SK-N-SH (cell line): ENCODE measurements at regions of chr17 and their contacts with region 1.

Region 1: GRCh38 chr17:67200720-67201301 is 44.2 kb downstream of the HELZ start:
- DNase-seq: peak; percentile 55
- H3K4me3 ChIP-seq: peak overlapping the region in 1 of 2 experiments; percentile 15; a peak in 1 of 4 replicates
- H3K27ac ChIP-seq: no peak overlapping the region
- H3K4me1 ChIP-seq: peaks cover 0 to 8% of the 10 kb centered on the region in 2 experiments; a peak in 3 of 4 replicates
- H3K27me3 ChIP-seq: no peaks in the 10 kb centered on the region
- CTCF ChIP-seq: peak; percentile 66
- EP300 ChIP-seq: no peak
- RAD21 ChIP-seq: peak; percentile 22; the same call in 1 of the 2 replicates

Region 2: DNA sequence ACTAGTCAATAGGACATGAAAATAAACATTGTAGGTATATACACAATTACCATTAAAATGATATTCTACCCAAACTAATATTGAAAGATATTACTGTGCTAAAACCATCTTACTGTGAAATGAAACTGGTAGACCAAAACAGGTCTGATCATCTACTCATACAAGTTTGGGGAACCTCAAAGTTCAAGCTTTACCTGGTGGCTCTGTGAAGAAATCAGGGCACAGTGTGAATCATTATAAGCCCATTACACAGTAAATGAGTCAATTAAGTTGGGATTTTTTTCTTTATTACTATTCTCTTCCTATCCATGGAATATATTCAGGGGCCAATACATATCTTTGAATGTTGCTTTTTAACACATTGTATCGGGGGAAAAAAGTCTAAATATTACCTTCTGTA is 12.9 kb before region 1 on chr17:
- CTCF ChIA-PET with region 1: interaction called, 16 read pairs
- POLR2A ChIA-PET with region 1: no interaction called
- DNase-seq: no peak
- H3K4me3 ChIP-seq: no peak overlapping the region
- H3K27ac ChIP-seq: no peak overlapping the region
- H3K4me1 ChIP-seq: no peaks in the 10 kb centered on the region; a peak in 1 of 4 replicates
- H3K27me3 ChIP-seq: no peaks in the 10 kb centered on the region
- CTCF ChIP-seq: no peak
- EP300 ChIP-seq: no peak
- RAD21 ChIP-seq: no peak

Region 3: GRCh38 chr17:67212689-67213417 is 12.0 kb after region 1 on chr17:
- CTCF ChIA-PET with region 1: interaction called, 79 read pairs
- POLR2A ChIA-PET with region 1: no interaction called
- DNase-seq: no peak
- H3K4me3 ChIP-seq: no peak overlapping the region
- H3K27ac ChIP-seq: peak overlapping the region; percentile 5 to 26
- H3K4me1 ChIP-seq: peaks cover 12 to 17% of the 10 kb centered on the region in 2 experiments
- H3K27me3 ChIP-seq: no peaks in the 10 kb centered on the region
- CTCF ChIP-seq: no peak
- EP300 ChIP-seq: no peak
- RAD21 ChIP-seq: no peak

Region 4: DNA sequence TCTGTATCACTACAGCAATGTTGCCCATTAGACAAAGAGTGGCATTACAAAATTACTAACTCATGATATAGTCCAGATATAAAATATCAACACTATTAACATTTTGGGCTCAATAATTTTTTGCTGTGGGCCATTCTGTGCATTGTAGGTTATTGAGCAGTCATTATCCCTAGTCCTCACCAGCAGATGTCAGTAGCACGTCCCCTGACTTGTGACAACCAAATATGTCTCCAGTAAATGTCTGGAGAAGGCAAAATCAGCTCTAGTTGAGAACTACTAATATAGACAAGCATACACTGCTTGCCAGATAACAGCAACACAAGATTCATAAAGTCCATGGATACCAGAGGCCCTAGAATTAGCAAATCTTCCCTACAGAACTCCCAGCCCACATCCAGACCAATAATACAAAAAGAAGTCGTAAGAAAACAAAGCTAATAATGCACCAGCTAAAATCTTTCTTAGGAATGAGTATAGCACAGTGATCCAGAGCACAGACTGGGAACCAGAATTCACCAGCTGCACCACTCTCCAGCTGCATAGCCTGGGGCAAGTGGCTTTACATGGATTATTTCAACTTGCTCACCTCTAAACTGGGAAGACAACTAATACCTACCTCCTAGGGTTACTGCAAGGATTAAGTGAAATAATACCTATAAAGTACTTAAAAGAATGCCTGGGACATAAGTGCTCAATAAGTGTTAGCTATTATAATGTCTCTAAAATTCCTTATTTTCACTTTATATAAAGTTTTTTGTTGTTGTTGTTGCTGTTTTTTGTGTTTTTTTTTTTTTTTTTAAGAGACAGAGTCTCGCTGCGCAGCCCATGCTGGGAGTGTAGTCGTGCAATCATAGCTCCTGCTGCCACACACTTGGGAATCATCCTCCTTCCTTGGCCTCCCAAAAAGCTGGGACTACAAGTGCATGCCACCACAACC is 20.5 kb after region 1 on chr17:
- CTCF ChIA-PET with region 1: interaction called, 79 read pairs
- POLR2A ChIA-PET with region 1: no interaction called
- DNase-seq: peak; percentile 56
- H3K4me3 ChIP-seq: no peak overlapping the region
- H3K27ac ChIP-seq: peak overlapping the region in 1 of 2 experiments; percentile 69; a peak in 2 of 4 replicates
- H3K4me1 ChIP-seq: peaks cover 10 to 17% of the 10 kb centered on the region in 2 experiments; a peak in 2 of 4 replicates
- H3K27me3 ChIP-seq: no peaks in the 10 kb centered on the region
- CTCF ChIP-seq: peak; percentile 53
- EP300 ChIP-seq: 0 out of 4 replicates have a peak, but pooled peaks of 1 of the 2 experiments have one; percentile 41
- RAD21 ChIP-seq: peak; percentile 65